HepG2 (cell line): ENCODE measurements at regions of chr4 and their contacts with region 1.

Region 1: DNA sequence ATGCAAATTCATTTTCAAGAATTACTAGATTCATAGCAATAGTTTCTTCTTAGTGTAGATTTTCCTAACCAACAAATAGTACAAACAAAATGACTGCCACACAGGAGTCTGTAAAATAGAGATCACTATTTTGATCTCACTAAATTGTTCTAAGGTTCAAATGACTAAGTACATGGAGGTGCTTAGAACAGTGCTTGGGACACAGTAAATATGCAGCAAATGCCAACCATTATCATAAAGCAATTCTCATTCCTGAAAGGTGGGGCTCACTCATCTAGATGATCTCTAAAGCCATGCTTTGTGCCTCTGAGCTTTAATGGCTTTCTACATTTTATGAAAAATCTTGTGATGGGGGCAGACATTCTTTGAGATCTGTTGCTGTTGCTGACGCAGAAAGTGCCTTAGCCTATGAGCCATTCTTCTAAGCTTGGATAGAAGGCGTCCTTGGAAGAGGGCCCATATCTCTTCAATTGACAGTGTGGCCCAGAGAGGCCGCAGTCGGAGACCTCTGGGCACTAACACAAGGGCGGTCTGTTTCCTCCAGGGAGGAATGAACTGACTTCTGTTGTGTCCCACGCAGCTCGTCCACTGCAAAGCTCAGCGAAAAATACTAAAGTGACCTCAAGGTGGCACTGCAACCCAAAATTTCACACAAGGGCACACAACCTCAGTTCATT is 23.5 kb downstream of the TLR10 start:
- DNase-seq: peak; percentile 39
- ATAC-seq: peak; percentile 94
- H3K4me3 ChIP-seq: no peak overlapping the region
- H3K27ac ChIP-seq: no peak overlapping the region
- H3K4me1 ChIP-seq: no peaks in the 10 kb centered on the region
- H3K27me3 ChIP-seq: peaks cover 0 to 9% of the 10 kb centered on the region in 2 experiments; a peak in 1 of 5 replicates
- CTCF ChIP-seq: peak; percentile 77
- EP300 ChIP-seq: no peak
- POLR2A ChIP-seq: no peak
- RAD21 ChIP-seq: peak; percentile 44; the same call in 1 of the 2 replicates

Region 2: DNA sequence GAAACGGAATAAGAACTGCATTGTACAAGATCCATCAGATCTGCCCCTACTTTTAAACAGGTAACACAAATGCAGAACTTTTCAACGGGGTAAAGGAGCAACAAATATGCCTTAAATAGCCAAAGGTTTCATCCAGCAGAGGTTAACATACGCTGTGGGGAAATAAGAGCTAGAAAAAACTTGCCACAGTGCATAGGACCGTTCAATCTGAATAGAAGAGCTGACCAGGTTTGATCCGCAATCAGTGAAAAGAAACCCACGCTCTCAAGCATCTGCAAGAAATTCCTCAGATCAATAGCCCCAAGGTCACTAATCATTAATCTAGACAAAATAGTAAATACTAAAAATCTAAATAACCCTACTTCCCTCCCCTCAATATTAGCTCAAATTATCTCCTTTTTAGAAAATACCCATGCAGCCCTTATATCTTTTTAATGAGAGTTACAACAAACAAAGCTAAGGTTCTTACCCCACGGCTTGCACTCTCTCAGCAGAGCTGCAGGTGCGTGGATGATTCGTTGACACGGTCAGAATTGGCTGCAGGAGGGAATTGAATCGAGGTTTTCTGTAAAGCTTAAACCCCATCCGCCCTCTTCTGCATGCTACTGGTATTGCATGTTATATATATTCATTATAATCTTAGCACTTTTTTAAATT is 23.3 kb after region 1 on chr4 and contains the start of gene TLR10:
- CTCF ChIA-PET with region 1: interaction called, 16 read pairs
- POLR2A ChIA-PET with region 1: no interaction called
- in situ Hi-C with region 1: no loop called
- intact Hi-C with region 1: loop called (anchors 1 kb)
- DNase-seq: peak; percentile 20
- ATAC-seq: peak; percentile 71
- H3K4me3 ChIP-seq: no peak within 1 kb of the TSS
- H3K27ac ChIP-seq: no peak within 1 kb of the TSS
- H3K4me1 ChIP-seq: peaks cover 7% of the 10 kb centered on the region
- H3K27me3 ChIP-seq: 0 out of 5 replicates have a peak, but pooled peaks cover 0 to 8% of the 10 kb centered on the region in 2 experiments
- CTCF ChIP-seq: peak; percentile 54
- EP300 ChIP-seq: no peak
- POLR2A ChIP-seq: no peak
- RAD21 ChIP-seq: no peak
- total RNA-seq, gene TLR10: not detected in 2 replicates

Region 3: DNA sequence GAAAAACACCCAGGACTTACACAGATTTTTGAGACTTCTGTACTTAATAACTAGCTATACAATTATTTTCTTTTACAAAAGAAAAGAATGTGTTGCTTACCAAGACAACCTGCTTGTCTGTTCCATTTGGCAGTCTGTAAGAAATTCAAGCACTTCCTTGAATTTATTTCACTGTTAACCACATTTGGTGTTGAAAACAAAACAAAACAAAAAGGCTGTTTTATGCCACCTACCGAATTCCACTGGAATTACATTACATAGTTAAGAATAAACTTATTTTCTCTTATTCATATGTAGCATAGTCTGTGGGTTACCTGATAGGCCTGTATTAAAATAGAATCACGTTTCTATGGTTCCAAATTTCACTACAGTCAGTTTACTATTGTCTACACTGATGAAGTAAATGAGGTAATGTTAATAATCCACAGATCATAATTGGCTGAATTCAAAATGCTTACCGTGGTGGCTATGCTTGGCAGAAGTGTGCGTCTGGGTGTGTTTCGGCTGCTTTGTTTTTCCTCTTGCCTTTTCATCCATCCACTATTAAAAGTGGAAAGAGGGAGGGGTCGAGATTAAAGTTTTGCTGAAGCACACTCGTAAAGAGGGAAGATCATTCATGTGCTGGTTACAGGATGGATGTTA is 45.5 kb after region 1 on chr4 and contains the start of gene TLR1:
- CTCF ChIA-PET with region 1: interaction called, 5 read pairs
- POLR2A ChIA-PET with region 1: no interaction called
- in situ Hi-C with region 1: no loop called
- intact Hi-C with region 1: loop called (anchors 1 kb)
- DNase-seq: peak; percentile 25
- ATAC-seq: no peak
- H3K4me3 ChIP-seq: peak within 1 kb of the TSS in 1 of 3 experiments; percentile 16; a peak in 2 of 6 replicates
- H3K27ac ChIP-seq: no peak within 1 kb of the TSS
- H3K4me1 ChIP-seq: peaks cover 12% of the 10 kb centered on the region
- H3K27me3 ChIP-seq: peaks cover 0 to 8% of the 10 kb centered on the region in 2 experiments; a peak in 1 of 5 replicates
- CTCF ChIP-seq: peak; percentile 50
- EP300 ChIP-seq: no peak
- POLR2A ChIP-seq: no peak
- RAD21 ChIP-seq: no peak
- total RNA-seq, gene TLR1: 0.11 TPM in 1 of 2 replicates, not detected in the other

Region 4: GRCh38 chr4:38856524-38857337 is 97.5 kb after region 1 on chr4 and contains the start of gene TLR6:
- CTCF ChIA-PET with region 1: interaction called, 17 read pairs
- POLR2A ChIA-PET with region 1: no interaction called
- in situ Hi-C with region 1: loop called (anchors 5 kb)
- intact Hi-C with region 1: loop called (anchors 1 kb)
- DNase-seq: peak; percentile 57
- ATAC-seq: peak; percentile 47; the same call in 1 of the 3 replicates
- H3K4me3 ChIP-seq: peak within 1 kb of the TSS in 2 of 3 experiments; percentile 12 to 49; a peak in 2 of 6 replicates
- H3K27ac ChIP-seq: no peak within 1 kb of the TSS
- H3K4me1 ChIP-seq: peaks cover 12% of the 10 kb centered on the region
- H3K27me3 ChIP-seq: no peaks in the 10 kb centered on the region
- CTCF ChIP-seq: peak; percentile 72
- EP300 ChIP-seq: no peak
- POLR2A ChIP-seq: no peak
- RAD21 ChIP-seq: no peak
- total RNA-seq, gene TLR6: 0.52 and 0.71 TPM in 2 replicates

Region 5: DNA sequence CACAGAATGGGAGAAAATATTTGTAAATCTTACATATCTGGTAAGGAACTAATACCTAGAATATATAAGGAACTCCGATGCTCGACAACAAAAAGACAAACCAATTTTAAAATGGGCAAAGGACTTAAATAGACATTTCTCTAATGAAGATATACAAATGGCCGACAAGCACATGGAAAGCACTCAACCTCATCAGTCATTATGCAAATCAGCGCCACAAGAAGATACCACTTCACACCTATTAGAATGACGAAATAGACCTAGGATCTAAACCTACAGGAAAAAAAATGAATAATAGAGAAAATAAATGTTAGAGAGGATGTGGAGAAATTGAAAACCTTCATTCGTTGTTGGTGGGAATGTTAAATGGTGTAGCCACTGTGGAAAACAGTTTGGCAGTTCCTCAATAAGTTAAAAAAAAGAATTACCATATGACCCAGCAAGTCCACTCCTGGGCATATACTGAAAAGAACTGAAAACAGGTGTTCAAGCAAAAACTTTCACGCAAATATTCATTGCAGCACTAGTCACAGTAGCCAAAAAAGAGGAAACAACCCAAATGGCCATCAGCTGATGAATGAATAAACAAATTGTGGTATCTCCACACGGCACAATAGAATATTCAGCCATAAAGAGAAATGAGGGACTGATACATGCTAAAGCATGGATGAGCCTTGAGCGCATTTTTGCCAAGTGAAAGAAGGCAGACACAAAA is 365.8 kb after region 1 on chr4:
- CTCF ChIA-PET with region 1: no interaction called
- POLR2A ChIA-PET with region 1: no interaction called
- in situ Hi-C with region 1: loop called (anchors 25 kb)
- intact Hi-C with region 1: no loop called
- DNase-seq: no peak
- ATAC-seq: no peak
- H3K4me3 ChIP-seq: no peak overlapping the region
- H3K27ac ChIP-seq: no peak overlapping the region
- H3K4me1 ChIP-seq: no peaks in the 10 kb centered on the region
- H3K27me3 ChIP-seq: no peaks in the 10 kb centered on the region
- CTCF ChIP-seq: no peak
- EP300 ChIP-seq: no peak
- POLR2A ChIP-seq: no peak
- RAD21 ChIP-seq: no peak

Region 6: GRCh38 chr4:39134683-39135319 is 375.6 kb after region 1 on chr4:
- CTCF ChIA-PET with region 1: no interaction called
- POLR2A ChIA-PET with region 1: no interaction called
- in situ Hi-C with region 1: loop called (anchors 25 kb)
- intact Hi-C with region 1: loop called (anchors 1 kb)
- DNase-seq: no peak
- ATAC-seq: peak; percentile 20
- H3K4me3 ChIP-seq: peak overlapping the region in 2 of 3 experiments; percentile 1 to 20; a peak in 2 of 6 replicates
- H3K27ac ChIP-seq: no peak overlapping the region
- H3K4me1 ChIP-seq: peaks cover 11% of the 10 kb centered on the region
- H3K27me3 ChIP-seq: no peaks in the 10 kb centered on the region
- CTCF ChIP-seq: no peak
- EP300 ChIP-seq: no peak
- POLR2A ChIP-seq: no peak
- RAD21 ChIP-seq: no peak